ENCODE measurements at regions of chrX and their contacts with region 1.

Region 1: DNA sequence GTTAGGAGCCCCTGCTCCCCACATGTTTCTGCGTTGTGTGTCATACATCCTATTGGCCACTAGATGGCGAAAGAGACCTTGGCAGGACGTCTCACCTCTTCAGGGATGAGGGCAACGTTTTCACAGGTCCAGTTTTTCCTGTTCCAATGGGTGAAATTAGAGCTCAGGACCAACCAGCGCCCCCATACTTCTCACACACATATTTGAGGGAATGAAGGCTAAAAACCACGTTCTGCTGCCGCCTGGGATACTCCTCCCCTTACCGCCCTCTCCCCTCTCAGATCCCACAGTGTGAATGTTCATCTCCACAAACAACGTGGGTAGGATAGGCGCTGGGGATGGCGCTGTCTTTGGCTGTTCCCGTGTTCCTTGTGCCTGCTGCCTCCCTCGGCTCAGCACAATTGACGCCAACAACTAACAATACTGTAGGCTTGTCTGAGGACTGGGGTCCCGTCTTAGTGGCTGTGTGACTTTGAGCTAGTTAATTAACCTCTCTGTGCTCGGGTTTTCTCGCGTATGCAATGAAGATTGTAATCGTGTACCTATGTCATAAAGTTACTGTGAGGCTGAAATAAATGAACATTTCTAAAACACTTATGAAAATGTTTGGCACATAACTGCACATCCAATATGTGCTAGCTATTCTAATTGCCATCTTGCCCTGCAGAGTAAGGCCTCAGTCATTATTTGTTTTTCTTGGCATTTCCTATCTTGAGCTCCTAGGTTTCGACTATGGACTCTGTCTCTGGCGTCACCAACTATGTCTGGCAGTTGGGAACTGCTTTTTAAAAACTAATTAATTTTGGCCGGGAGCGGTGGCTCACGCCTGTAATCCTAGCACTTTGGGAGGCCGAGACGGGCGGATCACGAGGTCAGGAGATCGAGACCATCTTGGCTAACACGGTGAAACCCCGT is 181.3 kb upstream of the STK26 start:
- DNase-seq: no peak
- ATAC-seq: peak; percentile 49 to 78 (median 63)
- H3K4me3 ChIP-seq: no peak overlapping the region
- H3K27ac ChIP-seq: no peak overlapping the region
- H3K4me1 ChIP-seq: no peaks in the 10 kb centered on the region
- H3K27me3 ChIP-seq: peaks cover 0 to 18% (median 0%) of the 10 kb centered on the region in 3 donors
- CTCF ChIP-seq: peak; percentile 89

Region 2: DNA sequence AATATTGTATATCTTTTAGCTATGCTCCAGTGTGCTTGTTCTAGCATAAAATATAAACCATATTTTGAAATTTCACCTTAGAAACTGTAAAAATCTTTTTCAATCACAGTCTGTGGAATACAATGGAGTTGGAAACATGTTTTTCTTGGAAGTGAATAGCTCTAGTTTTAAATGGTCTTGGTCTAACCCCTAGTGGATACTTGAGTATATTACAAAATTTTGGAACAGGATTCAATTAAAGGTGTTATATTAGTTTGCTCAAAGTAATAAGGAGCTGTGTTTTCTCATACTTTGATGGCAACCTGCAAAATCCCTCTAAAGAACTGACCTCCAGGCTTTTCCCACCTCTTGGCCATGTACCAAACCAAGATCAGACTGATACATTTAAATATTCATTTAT is 229.5 kb after region 1 on chrX:
- intact Hi-C with region 1: loop called in 1 of 2 experiments (anchors 10 kb)
- DNase-seq: no peak
- ATAC-seq: no peak
- H3K4me3 ChIP-seq: no peak overlapping the region
- H3K27ac ChIP-seq: no peak overlapping the region
- H3K4me1 ChIP-seq: no peaks in the 10 kb centered on the region
- H3K27me3 ChIP-seq: no peaks in the 10 kb centered on the region
- CTCF ChIP-seq: peak; percentile 25

Measured in psoas muscle (tissue), 8 donors.